SK-N-SH (cell line): ENCODE measurements at regions of chr17 and their contacts with region 1.

Region 1: GRCh38 chr17:74659898-74660297 is 36.4 kb upstream of the CD300E start:
- DNase-seq: no peak
- H3K4me3 ChIP-seq: no peak overlapping the region
- H3K27ac ChIP-seq: no peak overlapping the region
- H3K4me1 ChIP-seq: no peaks in the 10 kb centered on the region; a peak in 1 of 4 replicates
- H3K27me3 ChIP-seq: no peaks in the 10 kb centered on the region
- CTCF ChIP-seq: no peak
- EP300 ChIP-seq: no peak
- RAD21 ChIP-seq: no peak

Region 2: GRCh38 chr17:74584292-74585060 is 75.4 kb before region 1 on chr17:
- CTCF ChIA-PET with region 1: no interaction called
- POLR2A ChIA-PET with region 1: no interaction called
- DNase-seq: no peak
- H3K4me3 ChIP-seq: no peak overlapping the region
- H3K27ac ChIP-seq: no peak overlapping the region
- H3K4me1 ChIP-seq: no peaks in the 10 kb centered on the region
- H3K27me3 ChIP-seq: no peaks in the 10 kb centered on the region
- CTCF ChIP-seq: no peak
- EP300 ChIP-seq: no peak
- RAD21 ChIP-seq: no peak

Region 3: GRCh38 chr17:74619077-74619673 is 40.7 kb before region 1 on chr17:
- CTCF ChIA-PET with region 1: interaction called, 13 read pairs
- POLR2A ChIA-PET with region 1: no interaction called
- DNase-seq: no peak
- H3K4me3 ChIP-seq: no peak overlapping the region
- H3K27ac ChIP-seq: no peak overlapping the region
- H3K4me1 ChIP-seq: no peaks in the 10 kb centered on the region
- H3K27me3 ChIP-seq: no peaks in the 10 kb centered on the region
- CTCF ChIP-seq: no peak
- EP300 ChIP-seq: no peak
- RAD21 ChIP-seq: no peak

Region 4: GRCh38 chr17:74647871-74648672 is 11.8 kb before region 1 on chr17:
- CTCF ChIA-PET with region 1: interaction called, 35 read pairs
- POLR2A ChIA-PET with region 1: interaction called, 4 read pairs
- DNase-seq: peak; percentile 67
- H3K4me3 ChIP-seq: no peak overlapping the region
- H3K27ac ChIP-seq: peak overlapping the region in 1 of 2 experiments; percentile 17; a peak in 1 of 4 replicates
- H3K4me1 ChIP-seq: peaks cover 0 to 26% of the 10 kb centered on the region in 2 experiments; a peak in 1 of 4 replicates
- H3K27me3 ChIP-seq: no peaks in the 10 kb centered on the region
- CTCF ChIP-seq: no peak
- EP300 ChIP-seq: peak in 1 of 2 experiments; percentile 60; a peak in 1 of 4 replicates
- RAD21 ChIP-seq: no peak

Region 5: GRCh38 chr17:74690409-74690825 is 30.5 kb after region 1 on chr17:
- CTCF ChIA-PET with region 1: interaction called, 12 read pairs
- POLR2A ChIA-PET with region 1: no interaction called
- DNase-seq: no peak
- H3K4me3 ChIP-seq: no peak overlapping the region
- H3K27ac ChIP-seq: no peak overlapping the region
- H3K4me1 ChIP-seq: no peaks in the 10 kb centered on the region
- H3K27me3 ChIP-seq: no peaks in the 10 kb centered on the region
- CTCF ChIP-seq: no peak
- EP300 ChIP-seq: no peak
- RAD21 ChIP-seq: no peak

Region 6: GRCh38 chr17:74730491-74731346 is 70.8 kb after region 1 on chr17:
- CTCF ChIA-PET with region 1: interaction called, 301 read pairs
- POLR2A ChIA-PET with region 1: no interaction called
- DNase-seq: no peak
- H3K4me3 ChIP-seq: no peak overlapping the region
- H3K27ac ChIP-seq: no peak overlapping the region
- H3K4me1 ChIP-seq: no peaks in the 10 kb centered on the region
- H3K27me3 ChIP-seq: peaks cover 18% of the 10 kb centered on the region
- CTCF ChIP-seq: no peak
- EP300 ChIP-seq: no peak
- RAD21 ChIP-seq: no peak

Region 7: GRCh38 chr17:74759243-74759801 is 99.4 kb after region 1 on chr17:
- CTCF ChIA-PET with region 1: interaction called, 15 read pairs
- POLR2A ChIA-PET with region 1: no interaction called
- DNase-seq: peak; percentile 38
- H3K4me3 ChIP-seq: no peak overlapping the region
- H3K27ac ChIP-seq: peak overlapping the region in 1 of 2 experiments; percentile 94; a peak in 2 of 4 replicates
- H3K4me1 ChIP-seq: peaks cover 45 to 68% of the 10 kb centered on the region in 2 experiments; a peak in 3 of 4 replicates
- H3K27me3 ChIP-seq: no peaks in the 10 kb centered on the region
- CTCF ChIP-seq: no peak
- EP300 ChIP-seq: no peak
- RAD21 ChIP-seq: no peak

Region 8: DNA sequence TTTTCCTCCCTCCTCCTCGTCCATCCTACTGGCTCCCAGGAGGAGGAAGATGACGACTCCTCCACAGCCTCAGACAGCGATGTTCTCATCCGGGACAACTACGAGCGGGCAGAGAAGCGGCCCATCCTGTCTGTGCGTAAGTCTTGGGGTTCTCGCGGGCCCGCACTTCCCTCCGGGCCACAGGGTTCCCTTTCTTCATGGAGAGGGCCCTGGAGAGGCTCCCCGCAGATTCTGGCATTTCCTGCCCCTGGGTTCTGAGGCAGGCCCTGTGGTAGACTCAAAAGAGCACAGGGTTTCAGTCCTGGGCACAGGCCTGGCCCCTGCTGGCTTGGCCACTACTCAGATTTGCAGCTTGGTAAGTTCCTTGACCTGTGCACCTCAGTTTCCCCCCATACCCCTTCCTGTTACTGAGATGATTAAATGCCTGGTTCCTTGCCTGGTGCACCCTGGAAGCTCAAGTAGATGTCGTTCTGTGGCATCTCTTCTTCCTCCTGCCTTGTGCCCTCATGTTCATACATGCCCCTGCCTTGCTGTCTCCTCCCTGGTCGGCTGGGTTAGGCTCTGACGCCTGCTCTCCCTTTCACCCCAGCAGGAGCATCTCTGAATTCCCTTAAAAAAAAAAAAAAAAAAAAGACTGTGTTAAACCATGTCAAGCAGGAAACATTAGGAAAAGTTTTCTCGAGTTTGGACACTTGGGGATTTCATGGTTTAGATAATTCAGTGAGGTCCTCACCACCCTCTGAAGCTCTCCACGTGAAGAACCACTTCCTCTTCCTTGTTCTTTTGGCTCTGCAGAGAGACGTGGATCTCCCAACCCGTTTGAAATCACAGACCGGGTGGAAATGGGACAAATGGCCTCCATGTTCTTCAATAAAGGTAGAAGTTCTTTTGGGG is 130.5 kb after region 1 on chr17:
- CTCF ChIA-PET with region 1: interaction called, 26 read pairs
- POLR2A ChIA-PET with region 1: no interaction called
- DNase-seq: no peak
- H3K4me3 ChIP-seq: no peak overlapping the region
- H3K27ac ChIP-seq: no peak overlapping the region
- H3K4me1 ChIP-seq: no peaks in the 10 kb centered on the region; a peak in 1 of 4 replicates
- H3K27me3 ChIP-seq: no peaks in the 10 kb centered on the region
- CTCF ChIP-seq: no peak
- EP300 ChIP-seq: no peak
- RAD21 ChIP-seq: no peak

Region 9: GRCh38 chr17:75124041-75124818 is 464.3 kb after region 1 on chr17:
- CTCF ChIA-PET with region 1: no interaction called
- POLR2A ChIA-PET with region 1: no interaction called
- DNase-seq: no peak
- H3K4me3 ChIP-seq: no peak overlapping the region
- H3K27ac ChIP-seq: no peak overlapping the region
- H3K4me1 ChIP-seq: peaks cover 4 to 7% of the 10 kb centered on the region in 2 experiments; a peak in 1 of 4 replicates
- H3K27me3 ChIP-seq: no peaks in the 10 kb centered on the region
- CTCF ChIP-seq: no peak
- EP300 ChIP-seq: peak in 1 of 2 experiments; percentile 35; a peak in 1 of 4 replicates
- RAD21 ChIP-seq: no peak